Mammary epithelial cell (primary cell): ENCODE measurements at regions of chr9 and their contacts with region 1.

Region 1: DNA sequence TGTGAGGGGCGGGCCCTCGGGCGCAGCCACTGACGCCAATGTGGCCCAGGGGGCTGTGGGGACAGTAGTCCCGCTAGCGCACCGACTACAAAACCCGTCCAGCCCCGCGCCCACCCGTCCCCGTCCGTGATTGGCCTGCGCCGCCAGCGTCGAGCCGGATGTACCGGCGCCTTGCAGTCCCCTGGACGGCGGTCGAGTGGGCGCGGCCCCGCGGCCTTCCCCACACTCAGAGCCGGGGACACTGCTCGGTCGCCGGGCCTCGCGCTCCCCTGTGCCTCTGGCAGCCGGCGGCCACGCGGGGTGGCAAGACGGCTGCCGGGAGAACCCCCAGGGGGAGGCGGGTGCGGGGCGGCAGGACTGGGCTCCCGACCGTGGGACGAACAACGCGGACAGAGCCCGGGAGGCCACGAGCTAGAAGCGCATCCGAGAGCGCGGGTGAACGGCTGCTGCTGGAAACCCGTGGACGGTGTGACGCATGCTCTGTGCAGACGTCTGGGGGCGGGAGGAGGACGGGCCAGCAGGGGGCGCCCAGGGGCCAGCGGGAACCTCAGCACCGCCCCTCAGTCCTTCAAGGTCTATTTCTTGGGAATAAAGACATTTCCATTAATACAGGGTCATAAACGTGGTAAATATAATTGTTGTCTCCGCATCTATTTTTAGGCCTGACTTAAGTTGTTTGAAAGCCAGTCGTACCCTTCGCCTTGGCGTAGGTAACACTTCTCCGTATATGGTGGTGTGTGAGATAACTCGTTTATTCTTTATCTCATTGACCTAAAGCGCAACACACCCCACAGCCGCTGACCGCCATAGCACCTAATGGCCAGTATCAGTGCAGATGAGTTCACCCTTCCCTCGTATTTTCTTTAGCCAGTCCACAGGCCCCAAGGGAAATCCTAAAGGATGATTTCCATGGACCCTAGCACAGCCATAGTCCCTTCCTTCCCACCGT is 629 bp upstream of the BICD2 start:
- DNase-seq: peak; percentile 98
- H3K4me3 ChIP-seq: peak overlapping the region; percentile 48 to 64 (median 61)
- H3K27ac ChIP-seq: peak overlapping the region; percentile 77
- H3K4me1 ChIP-seq: peaks cover 42% of the 10 kb centered on the region
- H3K27me3 ChIP-seq: no peaks in the 10 kb centered on the region
- CTCF ChIP-seq: peak; percentile 91 to 96

Region 2: DNA sequence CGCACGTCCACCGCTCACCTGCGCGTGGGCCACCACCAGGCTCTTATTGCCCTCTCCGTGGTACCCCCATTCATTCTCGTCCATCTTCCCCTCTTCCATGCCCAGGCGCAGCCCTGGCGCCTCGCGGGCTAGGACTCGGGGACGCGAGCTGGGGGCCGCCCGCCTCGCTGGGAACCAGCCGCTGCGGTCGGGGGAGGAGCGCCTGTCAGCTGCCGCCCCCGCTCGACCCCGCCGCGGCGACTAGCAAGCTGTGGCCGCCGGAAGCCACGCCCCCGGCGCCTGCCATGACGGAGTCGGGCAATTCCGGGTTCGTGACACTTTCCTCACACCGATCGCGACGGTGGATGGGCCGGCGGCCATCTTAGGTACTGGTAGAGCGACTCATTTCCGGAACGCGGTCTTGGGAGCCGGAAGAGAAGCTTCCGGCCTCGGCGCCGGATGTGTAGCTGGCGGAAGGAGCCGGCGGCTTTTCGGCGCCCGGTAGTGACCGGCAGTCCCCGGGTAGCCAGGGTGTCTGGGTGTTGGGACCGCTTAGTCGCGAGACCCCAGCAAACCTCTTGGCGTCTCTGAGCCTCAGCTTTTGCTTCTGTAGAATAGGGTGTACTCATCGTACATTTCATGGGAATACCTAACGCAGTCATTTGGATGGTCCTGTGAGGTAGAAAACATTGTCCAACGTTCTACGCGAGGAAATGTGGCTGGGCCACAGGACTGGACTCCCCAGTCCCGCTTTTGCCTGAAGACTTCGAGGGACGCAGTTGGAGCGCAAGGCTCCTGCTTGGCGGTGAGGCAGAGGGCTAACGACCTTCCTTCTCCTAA is 95.2 kb before region 1 on chr9 and contains the start of gene IPPK:
- CTCF ChIA-PET with region 1: no interaction called
- dilution Hi-C with region 1: no loop called
- in situ Hi-C with region 1: no loop called
- intact Hi-C with region 1: loop called (anchors 1 kb)
- DNase-seq: peak; percentile 98
- H3K4me3 ChIP-seq: peak within 1 kb of the TSS; percentile 69 to 97 (median 91)
- H3K27ac ChIP-seq: peak within 1 kb of the TSS; percentile 93
- H3K4me1 ChIP-seq: peaks cover 14% of the 10 kb centered on the region
- H3K27me3 ChIP-seq: no peaks in the 10 kb centered on the region
- CTCF ChIP-seq: no peak
- total RNA-seq, gene IPPK: 13.4 to 25.0 TPM

Region 3: GRCh38 chr9:92716557-92716956 is 48.7 kb before region 1 on chr9:
- CTCF ChIA-PET with region 1: no interaction called
- dilution Hi-C with region 1: no loop called
- in situ Hi-C with region 1: no loop called
- intact Hi-C with region 1: loop called (anchors 1 kb)
- DNase-seq: peak; percentile 46
- H3K4me3 ChIP-seq: no peak overlapping the region
- H3K27ac ChIP-seq: peak overlapping the region; percentile 29
- H3K4me1 ChIP-seq: peaks cover 30% of the 10 kb centered on the region
- H3K27me3 ChIP-seq: no peaks in the 10 kb centered on the region
- CTCF ChIP-seq: peak; percentile 83 to 96

Region 4: DNA sequence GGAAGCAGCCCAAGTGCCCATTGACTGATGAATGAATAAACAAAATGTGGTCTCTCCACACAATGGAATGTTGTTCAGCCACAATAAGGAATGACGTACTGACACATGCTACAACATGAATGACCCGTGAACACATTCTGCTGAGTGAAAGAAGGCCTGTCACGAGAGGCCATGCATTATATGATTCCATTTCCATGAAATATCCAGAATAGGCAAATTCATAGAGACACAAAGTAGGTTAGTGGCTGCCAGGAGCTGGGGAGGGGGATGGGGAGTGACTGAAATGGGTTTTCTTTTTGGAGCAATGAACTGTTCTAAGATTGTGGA is 42.0 kb before region 1 on chr9:
- CTCF ChIA-PET with region 1: no interaction called
- dilution Hi-C with region 1: loop called (anchors 5 kb)
- in situ Hi-C with region 1: no loop called
- intact Hi-C with region 1: loop called (anchors 1 kb)
- DNase-seq: peak; percentile 98
- H3K4me3 ChIP-seq: no peak overlapping the region
- H3K27ac ChIP-seq: peak overlapping the region; percentile 94
- H3K4me1 ChIP-seq: peaks cover 30% of the 10 kb centered on the region
- H3K27me3 ChIP-seq: no peaks in the 10 kb centered on the region
- CTCF ChIP-seq: no peak

Region 5: DNA sequence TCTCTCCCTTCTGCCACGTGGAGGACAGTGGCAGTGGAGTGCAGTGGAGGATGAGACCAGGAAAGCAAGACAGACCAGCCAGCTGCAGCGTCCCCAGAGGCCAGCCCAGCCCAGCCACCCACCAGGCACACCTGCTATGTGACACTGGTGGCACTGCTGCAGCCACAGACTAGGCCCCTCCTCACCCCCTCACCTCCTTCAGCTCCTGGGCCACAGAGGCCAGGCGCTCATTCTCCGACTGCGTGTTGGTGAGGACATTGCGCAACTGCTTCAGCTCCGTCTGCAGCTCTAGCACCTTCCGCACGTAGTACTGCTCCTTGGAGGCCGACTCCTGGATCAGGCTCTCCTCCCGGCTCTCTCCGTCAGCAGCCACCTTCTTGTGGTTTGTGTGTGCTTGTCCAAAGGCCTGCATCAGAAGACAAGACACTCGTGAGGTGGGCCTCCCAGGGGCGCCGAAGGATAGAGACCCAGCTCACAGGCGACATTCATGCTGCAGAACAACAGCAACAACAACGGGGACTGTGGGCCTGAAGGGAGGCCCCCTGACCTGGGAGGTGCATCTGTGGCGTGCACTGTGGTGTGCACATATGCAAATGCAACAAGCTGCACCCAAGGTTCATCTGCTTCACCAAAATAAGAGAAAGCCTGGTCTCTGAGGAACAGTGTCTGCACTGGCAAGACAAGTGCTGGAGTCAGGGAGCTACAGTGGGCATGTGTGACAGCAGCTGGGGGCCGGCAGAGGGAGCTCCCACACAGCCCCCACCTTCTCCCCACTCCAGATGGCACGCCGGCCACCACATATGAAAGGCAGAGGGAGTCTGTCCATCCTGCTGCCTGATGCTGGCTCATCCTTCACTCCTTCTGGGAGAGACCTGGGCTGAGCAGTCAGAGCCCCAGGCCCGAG is 36.2 kb before region 1 on chr9:
- CTCF ChIA-PET with region 1: no interaction called
- dilution Hi-C with region 1: loop called (anchors 5 kb)
- in situ Hi-C with region 1: no loop called
- intact Hi-C with region 1: loop called (anchors 1 kb)
- DNase-seq: no peak
- H3K4me3 ChIP-seq: no peak overlapping the region
- H3K27ac ChIP-seq: no peak overlapping the region
- H3K4me1 ChIP-seq: peaks cover 6% of the 10 kb centered on the region
- H3K27me3 ChIP-seq: no peaks in the 10 kb centered on the region
- CTCF ChIP-seq: peak; percentile 30 to 46

Region 6: DNA sequence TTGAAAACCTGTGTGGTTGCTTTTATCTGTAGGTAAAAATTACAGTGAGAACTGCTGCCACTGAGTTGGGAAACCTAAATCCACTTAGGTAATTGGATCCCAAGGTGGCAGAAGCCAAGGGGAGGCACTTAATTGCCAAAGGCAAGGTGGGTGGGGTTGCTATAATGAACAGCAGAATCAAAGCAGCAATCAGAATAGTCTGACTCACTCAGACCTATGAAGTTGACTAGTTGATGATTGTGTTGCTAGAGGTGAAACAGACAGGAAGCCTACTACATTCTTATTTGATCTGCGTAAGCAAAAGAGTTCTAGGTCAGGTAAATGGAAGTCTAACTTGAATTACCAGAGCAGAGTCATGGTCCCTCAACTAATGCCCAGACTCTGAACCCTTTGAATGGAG is 16.7 kb after region 1 on chr9:
- CTCF ChIA-PET with region 1: no interaction called
- dilution Hi-C with region 1: no loop called
- in situ Hi-C with region 1: no loop called
- intact Hi-C with region 1: loop called (anchors 2 kb)
- DNase-seq: peak; percentile 94
- H3K4me3 ChIP-seq: no peak overlapping the region
- H3K27ac ChIP-seq: peak overlapping the region; percentile 75
- H3K4me1 ChIP-seq: peaks cover 16% of the 10 kb centered on the region
- H3K27me3 ChIP-seq: no peaks in the 10 kb centered on the region
- CTCF ChIP-seq: no peak

Region 7: DNA sequence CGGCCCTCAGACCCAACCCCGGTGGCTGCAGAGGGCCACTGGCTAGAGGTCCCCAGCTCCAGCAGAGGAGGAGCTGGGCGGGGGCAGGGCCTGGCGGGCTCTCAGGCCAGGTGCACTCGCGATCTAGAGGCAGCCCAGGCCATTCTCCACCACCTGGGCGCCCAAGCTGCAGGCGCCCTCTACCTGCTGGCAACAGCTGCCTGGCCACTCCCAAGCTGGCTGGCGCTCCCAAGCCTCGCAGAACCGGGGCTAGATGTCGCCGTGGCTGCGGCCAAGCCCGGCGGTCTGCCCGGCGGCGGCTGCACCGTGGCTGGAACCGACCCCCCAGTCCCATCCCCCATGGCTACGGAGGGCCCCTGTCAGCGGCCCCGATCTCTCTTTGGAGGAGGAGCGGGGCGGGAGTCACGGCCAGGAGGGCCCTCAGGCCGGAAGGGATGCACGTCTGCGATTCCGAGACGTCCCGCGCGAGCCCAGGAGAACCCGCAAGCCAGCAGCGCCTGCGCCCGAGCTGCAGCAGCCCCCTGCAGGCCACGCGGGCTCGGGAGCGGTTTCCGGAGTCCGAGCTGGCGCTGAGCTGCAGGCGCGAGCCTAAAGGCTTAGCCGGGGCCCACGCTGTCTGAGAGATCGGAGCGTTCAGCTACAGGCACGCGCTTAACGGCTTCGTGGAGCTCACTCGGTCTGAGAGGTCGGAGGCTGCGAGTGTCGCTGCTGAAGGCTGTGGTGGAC is 43.6 kb after region 1 on chr9:
- CTCF ChIA-PET with region 1: no interaction called
- dilution Hi-C with region 1: no loop called
- in situ Hi-C with region 1: no loop called
- intact Hi-C with region 1: loop called (anchors 1 kb)
- DNase-seq: peak; percentile 89
- H3K4me3 ChIP-seq: peak overlapping the region; percentile 20 to 51 (median 45)
- H3K27ac ChIP-seq: no peak overlapping the region
- H3K4me1 ChIP-seq: peaks cover 23% of the 10 kb centered on the region
- H3K27me3 ChIP-seq: peaks cover 20% of the 10 kb centered on the region
- CTCF ChIP-seq: peak; percentile 8 to 54

Region 8: GRCh38 chr9:93143830-93144530 is 378.7 kb after region 1 on chr9:
- CTCF ChIA-PET with region 1: no interaction called
- dilution Hi-C with region 1: no loop called
- in situ Hi-C with region 1: no loop called
- intact Hi-C with region 1: no loop called
- DNase-seq: peak; percentile 65
- H3K4me3 ChIP-seq: no peak overlapping the region
- H3K27ac ChIP-seq: no peak overlapping the region
- H3K4me1 ChIP-seq: peaks cover 37% of the 10 kb centered on the region
- H3K27me3 ChIP-seq: no peaks in the 10 kb centered on the region
- CTCF ChIP-seq: no peak